Dendritic cell treated with granulocyte-macrophage colony-stimulating factor and Interleukin-4, amounts not matched to agents 40 ng/mL and 50 ng/mL, for 4 days (primary cell): ENCODE measurements at regions of chr2 and their contacts with region 1.

Region 1: DNA sequence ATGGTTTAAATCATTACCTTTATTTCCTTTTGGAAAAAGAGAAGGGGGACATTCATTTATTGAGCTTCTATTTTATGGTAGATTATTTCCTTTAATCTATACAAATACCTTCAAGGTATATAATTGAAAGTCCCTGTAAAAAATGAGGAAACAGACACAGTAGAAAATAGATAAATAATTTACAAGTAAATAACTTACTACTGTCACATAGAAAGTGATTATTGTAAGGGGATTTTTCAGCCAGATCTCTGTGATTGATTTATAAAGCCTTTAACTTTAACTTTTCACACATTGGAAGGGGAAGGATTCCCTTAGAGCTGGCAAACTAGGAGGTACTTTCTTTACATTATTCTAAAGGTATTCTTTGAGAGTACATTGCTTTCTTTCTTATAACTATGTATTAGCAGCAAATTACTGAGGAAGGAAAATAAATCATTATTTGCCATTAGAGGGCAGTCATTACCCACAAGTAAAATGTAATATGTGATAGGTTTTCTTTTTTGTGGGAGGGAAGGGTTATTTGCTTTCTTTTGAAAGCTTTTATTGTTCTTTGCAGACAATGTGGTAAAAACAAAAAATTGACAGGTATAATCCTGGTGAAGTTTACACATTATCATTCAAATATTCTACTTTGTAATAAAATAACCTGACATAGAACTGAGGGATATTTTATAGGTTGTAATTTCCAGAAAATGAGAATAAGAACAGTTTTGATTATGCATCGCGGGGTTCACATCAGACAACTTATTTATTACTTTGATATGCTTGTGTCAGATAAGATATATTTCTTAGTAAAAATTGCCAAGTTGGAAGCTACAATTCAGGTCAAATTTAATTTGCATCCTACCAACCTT is 24.8 kb upstream of the RPE start:
- H3K4me3 Mint-ChIP-seq: no peak overlapping the region
- H3K27ac Mint-ChIP-seq: no peak overlapping the region
- H3K4me1 Mint-ChIP-seq: no peaks in the 10 kb centered on the region
- H3K27me3 Mint-ChIP-seq: peaks cover 5% of the 10 kb centered on the region

Region 2: DNA sequence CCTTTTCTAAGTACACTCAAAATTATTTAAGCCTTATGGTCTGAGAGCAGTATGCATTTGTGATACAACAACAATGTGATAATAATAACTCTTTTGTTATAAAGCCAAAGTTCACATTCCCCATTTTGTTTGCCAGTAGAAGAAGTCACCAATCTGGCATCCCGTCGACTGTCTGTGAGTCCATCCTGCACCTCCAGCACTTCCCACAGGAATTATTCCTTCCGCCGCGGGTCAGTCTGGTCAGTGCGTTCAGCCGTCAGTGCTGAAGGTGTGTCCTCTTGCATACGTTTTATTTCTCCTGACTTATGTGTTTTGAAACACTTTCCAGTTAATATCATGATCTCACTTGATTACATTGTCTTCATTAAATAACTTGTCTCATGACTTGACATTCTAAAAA is 55.5 kb before region 1 on chr2:
- intact Hi-C with region 1: no loop called
- H3K4me3 Mint-ChIP-seq: no peak overlapping the region
- H3K27ac Mint-ChIP-seq: no peak overlapping the region
- H3K4me1 Mint-ChIP-seq: no peaks in the 10 kb centered on the region
- H3K27me3 Mint-ChIP-seq: peaks cover 1% of the 10 kb centered on the region

Region 3: GRCh38 chr2:210009895-210010294 is 32.3 kb after region 1 on chr2:
- intact Hi-C with region 1: loop called (anchors 5 kb)
- H3K4me3 Mint-ChIP-seq: no peak overlapping the region
- H3K27ac Mint-ChIP-seq: no peak overlapping the region
- H3K4me1 Mint-ChIP-seq: peaks cover 42% of the 10 kb centered on the region
- H3K27me3 Mint-ChIP-seq: no peaks in the 10 kb centered on the region

Region 4: GRCh38 chr2:210034087-210034683 is 56.6 kb after region 1 on chr2:
- intact Hi-C with region 1: no loop called
- H3K4me3 Mint-ChIP-seq: no peak overlapping the region
- H3K27ac Mint-ChIP-seq: no peak overlapping the region
- H3K4me1 Mint-ChIP-seq: peaks cover 13% of the 10 kb centered on the region
- H3K27me3 Mint-ChIP-seq: no peaks in the 10 kb centered on the region

Region 5: DNA sequence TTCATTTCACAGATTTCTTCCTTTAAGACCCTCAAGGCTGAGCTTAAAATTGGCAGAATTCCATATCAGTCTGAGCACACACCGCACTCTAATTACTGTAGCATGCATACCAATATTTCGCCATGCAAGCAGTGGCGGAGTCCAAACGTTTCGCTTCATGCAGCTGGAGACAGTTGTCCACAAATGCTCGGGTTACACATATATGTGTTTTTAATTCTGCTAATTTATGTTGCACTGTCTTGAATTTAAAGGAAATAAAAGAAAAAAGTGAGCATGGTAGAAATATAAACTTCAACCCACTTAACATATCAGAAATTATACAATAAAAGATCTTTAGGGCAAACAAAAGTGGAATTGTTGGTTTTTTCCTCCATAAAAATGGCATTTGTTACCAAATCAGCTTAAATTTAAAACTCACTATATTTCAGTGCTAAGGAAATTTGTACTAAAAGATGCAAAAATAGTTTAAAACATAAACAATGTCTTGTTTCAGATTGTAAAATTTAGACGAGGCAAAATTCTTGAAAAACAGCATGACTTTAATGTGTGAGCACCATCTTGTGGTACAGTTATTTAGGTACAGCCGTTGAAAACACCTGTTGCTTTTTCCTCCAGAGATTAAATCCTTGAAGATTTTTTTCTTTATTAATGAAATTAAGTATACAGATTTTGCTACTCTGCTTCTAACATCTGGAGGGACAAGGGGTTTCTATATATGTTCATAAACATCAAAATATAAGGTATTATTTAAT is 217.7 kb after region 1 on chr2:
- intact Hi-C with region 1: loop called (anchors 1 kb)
- H3K4me3 Mint-ChIP-seq: no peak overlapping the region
- H3K27ac Mint-ChIP-seq: no peak overlapping the region
- H3K4me1 Mint-ChIP-seq: no peaks in the 10 kb centered on the region
- H3K27me3 Mint-ChIP-seq: no peaks in the 10 kb centered on the region